ENCODE measurements at regions of chr3 and their contacts with region 1.

Region 1: GRCh38 chr3:3734881-3735280 is 64.3 kb upstream of the LRRN1 start:
- DNase-seq: no peak
- H3K4me3 ChIP-seq: no peak overlapping the region
- H3K27ac ChIP-seq: no peak overlapping the region
- H3K4me1 ChIP-seq: no peaks in the 10 kb centered on the region
- H3K27me3 ChIP-seq: no peaks in the 10 kb centered on the region
- CTCF ChIP-seq: no peak

Region 2: GRCh38 chr3:3699816-3700633 is 34.9 kb before region 1 on chr3:
- CTCF ChIA-PET with region 1: no interaction called
- dilution Hi-C with region 1: loop called (anchors 5 kb)
- in situ Hi-C with region 1: no loop called
- intact Hi-C with region 1: no loop called
- DNase-seq: peak; percentile 12
- H3K4me3 ChIP-seq: no peak overlapping the region
- H3K27ac ChIP-seq: no peak overlapping the region
- H3K4me1 ChIP-seq: no peaks in the 10 kb centered on the region
- H3K27me3 ChIP-seq: no peaks in the 10 kb centered on the region
- CTCF ChIP-seq: no peak

Measured in mammary epithelial cell (primary cell).